Activated T-helper 1 cell treated with anti-CD3 and anti-CD28 coated beads, Interleukin-12 subunit alpha, Interleukin-12 subunit beta, Interleukin-2, Interleukin-4 antibody, amounts not matched to agents 30 ng/mL and 10 ng/mL and 1 ng/mL, durations not matched to agents 14 hours and 24 hours and 36 hours (primary cell): ENCODE measurements at regions of chr6 and their contacts with region 1.

Region 1: GRCh38 chr6:150813319-150813992 is 52.0 kb upstream of the MTHFD1L start:
- DNase-seq: no peak
- H3K4me3 Mint-ChIP-seq: no peak overlapping the region
- H3K27ac Mint-ChIP-seq: peak overlapping the region; percentile 33
- H3K4me1 Mint-ChIP-seq: peaks cover 9% of the 10 kb centered on the region
- H3K27me3 Mint-ChIP-seq: peaks cover 6% of the 10 kb centered on the region

Region 2: DNA sequence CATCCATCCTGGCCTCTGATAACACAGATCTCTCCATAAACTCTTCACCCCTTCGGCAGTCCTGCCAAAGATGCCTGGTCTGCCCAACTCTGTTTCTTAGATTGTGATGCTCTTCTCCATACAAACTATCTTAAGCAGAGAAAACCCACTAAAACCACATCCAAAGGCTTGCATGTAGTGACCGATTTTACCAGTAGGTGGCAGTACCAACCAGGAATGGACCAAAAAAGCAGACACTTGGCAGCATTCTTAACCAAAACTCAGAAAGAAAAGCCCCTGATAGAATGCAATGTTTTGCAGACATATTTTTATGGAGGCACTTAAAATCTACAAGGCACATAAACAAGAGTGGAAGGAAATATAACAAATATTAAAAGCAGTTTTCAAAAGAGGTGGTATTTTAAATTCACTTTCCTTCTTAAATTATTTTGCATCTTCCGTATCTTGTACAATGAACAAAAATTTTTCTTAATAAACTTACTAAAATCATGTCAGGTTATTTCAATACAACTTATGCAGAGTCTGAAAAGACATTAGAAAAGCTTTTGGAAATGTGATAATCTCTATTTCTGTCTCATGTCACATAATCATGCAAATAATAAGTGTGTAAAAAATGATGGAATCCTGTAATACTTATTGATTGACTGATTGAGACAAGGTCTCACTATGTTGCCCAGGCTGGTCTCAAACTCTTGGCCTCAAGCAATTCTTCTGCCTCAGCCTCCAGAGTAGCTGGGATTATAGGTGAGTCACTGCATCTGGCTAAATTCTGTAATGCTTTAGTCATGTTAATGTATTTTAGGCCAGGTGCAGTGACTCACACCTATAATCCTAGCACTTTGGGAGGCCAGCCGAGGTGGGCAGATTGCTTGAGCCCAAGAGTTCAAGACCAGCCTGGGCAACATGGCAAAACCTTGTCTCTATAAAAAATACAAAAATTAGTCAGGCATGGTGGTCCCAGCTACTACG is 978.7 kb before region 1 on chr6:
- intact Hi-C with region 1: loop called (anchors 10 kb)
- DNase-seq: peak; percentile 60
- H3K4me3 Mint-ChIP-seq: no peak overlapping the region
- H3K27ac Mint-ChIP-seq: no peak overlapping the region
- H3K4me1 Mint-ChIP-seq: peaks cover 5% of the 10 kb centered on the region
- H3K27me3 Mint-ChIP-seq: peaks cover 3% of the 10 kb centered on the region

Region 3: DNA sequence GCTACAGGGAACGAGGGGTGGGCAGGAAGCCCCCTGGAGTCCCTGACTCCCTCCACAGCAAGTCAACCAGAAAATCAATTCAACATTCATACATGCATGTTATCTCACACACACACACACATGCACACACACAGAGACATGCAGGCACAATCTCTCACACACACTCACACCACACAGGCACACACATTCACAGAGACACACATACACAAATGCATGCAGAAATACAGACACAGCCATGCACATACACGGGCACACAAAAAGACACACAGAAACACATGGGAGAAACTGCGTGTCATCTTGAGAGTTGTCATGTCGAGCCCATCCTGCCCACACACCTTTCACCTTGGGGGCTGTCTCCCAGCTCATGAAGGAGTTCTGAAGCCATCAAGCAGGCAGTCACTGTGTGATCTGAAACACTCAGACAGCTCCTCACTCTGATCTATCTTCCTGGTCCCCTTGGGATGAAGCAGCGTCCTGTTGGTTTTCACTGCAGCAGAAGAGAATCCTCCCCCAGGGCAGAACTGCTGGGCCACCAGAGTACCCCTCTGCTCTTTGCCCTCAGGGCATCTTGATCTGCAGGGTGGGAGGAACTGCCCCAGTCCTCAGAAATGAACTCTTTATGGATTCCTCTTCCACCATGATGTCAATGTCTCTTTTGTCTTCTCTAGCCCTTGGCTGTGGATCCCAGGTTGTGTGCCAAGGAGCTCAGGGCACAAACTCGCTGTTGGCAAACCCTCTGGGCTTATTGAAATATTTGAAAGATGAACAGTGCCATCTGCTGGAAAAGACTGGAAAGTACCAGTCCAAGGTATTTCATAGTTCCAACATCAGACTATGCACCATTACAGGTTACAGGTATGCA is 796.9 kb before region 1 on chr6:
- intact Hi-C with region 1: loop called (anchors 1 kb)
- DNase-seq: peak; percentile 44
- H3K4me3 Mint-ChIP-seq: no peak overlapping the region
- H3K27ac Mint-ChIP-seq: no peak overlapping the region
- H3K4me1 Mint-ChIP-seq: peaks cover 21% of the 10 kb centered on the region
- H3K27me3 Mint-ChIP-seq: peaks cover 70% of the 10 kb centered on the region

Region 4: DNA sequence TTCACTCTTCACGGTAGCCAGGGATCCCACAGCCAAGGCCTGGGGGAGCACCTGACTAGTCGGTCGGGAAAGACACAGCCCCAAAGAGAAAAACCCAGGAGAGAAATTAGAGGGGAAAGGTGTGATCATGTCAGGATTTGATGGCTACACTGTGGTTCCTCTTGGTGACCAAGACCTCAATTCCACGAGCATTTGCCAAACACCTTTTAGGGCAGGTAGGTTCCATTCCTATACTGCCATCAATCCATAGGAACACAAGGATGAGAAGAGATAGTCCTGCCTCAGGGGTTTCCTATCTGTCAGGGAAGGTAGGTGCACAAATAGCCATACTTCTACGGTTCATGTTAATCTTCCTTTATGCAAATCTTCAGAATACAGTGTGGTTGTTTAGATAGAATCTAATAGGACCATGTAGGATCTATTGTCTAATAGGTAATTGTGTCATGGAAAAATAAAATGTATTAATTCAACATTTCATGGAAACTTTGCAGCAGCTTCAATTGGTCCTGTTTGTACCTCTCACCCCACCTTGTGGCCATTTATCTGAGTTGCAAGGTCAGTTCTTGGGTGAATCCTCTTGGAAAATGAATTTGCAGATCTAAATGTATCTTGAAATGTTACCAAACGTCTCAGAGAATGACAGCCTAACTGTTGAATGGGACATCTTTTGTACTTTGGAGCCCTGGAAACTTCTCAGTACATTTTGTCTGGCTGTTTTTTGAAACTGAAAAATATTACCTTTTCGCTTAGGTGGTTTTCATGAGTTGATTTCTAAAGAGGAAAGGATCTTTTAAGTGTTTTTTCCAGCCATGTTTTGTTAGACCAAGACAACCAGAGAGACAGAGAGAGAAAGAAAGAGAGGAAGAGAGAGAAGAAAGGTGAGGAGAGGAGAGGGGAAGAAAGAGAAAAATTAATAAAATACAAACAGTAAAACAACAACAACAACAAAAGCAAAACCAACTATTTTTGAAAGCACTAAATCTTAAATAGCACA is 478.4 kb before region 1 on chr6:
- intact Hi-C with region 1: loop called (anchors 1 kb)
- DNase-seq: no peak
- H3K4me3 Mint-ChIP-seq: no peak overlapping the region
- H3K27ac Mint-ChIP-seq: no peak overlapping the region
- H3K4me1 Mint-ChIP-seq: no peaks in the 10 kb centered on the region
- H3K27me3 Mint-ChIP-seq: peaks cover 7% of the 10 kb centered on the region

Region 5: DNA sequence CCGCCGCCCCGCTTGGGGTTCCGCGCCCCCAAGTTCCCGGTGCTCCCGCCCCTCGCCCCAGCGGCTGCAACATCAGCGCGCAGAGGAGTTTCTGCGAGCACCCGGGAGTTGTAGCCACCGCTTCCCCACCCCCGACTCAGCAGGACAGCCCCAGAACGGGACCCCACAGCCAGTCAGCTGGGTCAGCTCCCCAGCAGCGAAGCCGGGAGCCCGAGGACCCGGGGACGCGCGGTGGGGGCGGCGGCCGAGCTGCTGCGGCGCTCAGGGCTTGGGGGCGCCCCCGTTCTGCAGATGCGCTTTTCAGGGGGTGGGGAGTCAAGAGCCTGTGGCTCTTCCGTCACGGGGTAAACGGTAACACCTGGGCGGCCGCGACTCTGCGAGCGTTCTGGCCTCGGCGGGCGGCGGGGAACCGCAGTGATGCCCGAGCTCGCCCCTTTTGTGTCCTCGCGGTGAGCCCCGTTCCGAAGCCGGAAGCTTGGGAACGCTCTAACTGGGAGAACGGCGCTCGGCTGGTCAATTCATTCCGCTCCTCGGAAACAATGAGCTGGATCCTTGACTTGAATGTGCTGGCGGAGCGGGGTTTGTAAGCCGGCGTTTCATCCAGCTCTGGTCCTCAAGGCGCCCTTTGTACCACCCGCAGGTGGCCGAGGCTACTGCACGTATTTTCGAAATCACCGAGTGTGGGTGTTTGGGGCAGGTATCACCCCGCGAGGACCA is 213.0 kb before region 1 on chr6:
- intact Hi-C with region 1: loop called (anchors 2 kb)
- DNase-seq: peak; percentile 27
- H3K4me3 Mint-ChIP-seq: peak overlapping the region; percentile 83
- H3K27ac Mint-ChIP-seq: peak overlapping the region; percentile 73
- H3K4me1 Mint-ChIP-seq: peaks cover 17% of the 10 kb centered on the region
- H3K27me3 Mint-ChIP-seq: peaks cover 60% of the 10 kb centered on the region

Region 6: GRCh38 chr6:151323791-151324487 is 510.5 kb after region 1 on chr6:
- intact Hi-C with region 1: loop called (anchors 2 kb)
- DNase-seq: peak; percentile 56
- H3K4me3 Mint-ChIP-seq: peak overlapping the region; percentile 9
- H3K27ac Mint-ChIP-seq: no peak overlapping the region
- H3K4me1 Mint-ChIP-seq: peaks cover 19% of the 10 kb centered on the region
- H3K27me3 Mint-ChIP-seq: peaks cover 39% of the 10 kb centered on the region